ENCODE measurements at regions of chr2 and their contacts with region 1.

Region 1: GRCh38 chr2:100893392-100894089 is 73.6 kb downstream of the NPAS2 start:
- DNase-seq: peak in 1 of 4 donors; percentile 35
- ATAC-seq: no peak
- H3K4me3 ChIP-seq: no peak overlapping the region
- H3K27ac ChIP-seq: peak overlapping the region in 1 of 4 donors; percentile 23
- H3K4me1 ChIP-seq: peaks cover 27% of the 10 kb centered on the region
- H3K27me3 ChIP-seq: no peaks in the 10 kb centered on the region
- CTCF ChIP-seq: no peak
- POLR2A ChIP-seq: no peak

Region 2: DNA sequence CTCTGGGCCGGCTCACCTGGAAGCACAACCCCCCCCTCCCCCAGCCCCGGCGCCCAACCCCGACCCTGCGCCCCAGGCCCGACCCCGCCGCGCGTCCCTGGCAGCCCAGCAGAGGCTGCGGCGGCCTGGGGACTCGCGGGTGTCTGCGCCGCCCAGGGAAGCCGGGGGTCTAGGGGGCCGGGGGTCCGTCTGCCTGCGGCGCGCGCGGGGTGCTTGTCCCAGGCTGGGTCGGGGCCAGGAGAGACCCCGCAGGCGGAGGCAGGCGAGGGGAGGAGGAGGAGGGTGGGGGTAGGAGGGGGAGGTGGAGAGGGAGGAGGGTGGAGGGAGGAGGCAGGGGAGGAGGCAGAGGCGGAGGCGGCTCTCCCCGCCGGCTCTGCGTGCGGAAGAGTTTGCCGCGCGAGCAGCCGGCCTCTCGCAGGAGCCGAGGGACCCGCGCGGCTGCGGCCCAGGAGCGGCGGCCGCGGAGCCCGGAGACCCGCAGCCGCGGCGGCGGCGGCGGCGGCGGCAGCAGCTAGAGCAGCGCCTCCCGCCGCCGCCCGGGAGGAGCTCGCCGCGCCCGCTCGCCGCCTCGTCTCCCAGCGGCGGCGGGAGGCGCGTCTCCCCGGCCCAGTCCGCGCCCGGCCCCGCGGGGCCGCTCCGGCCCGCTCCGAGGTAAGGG is 73.6 kb before region 1 on chr2 and contains the start of gene NPAS2:
- intact Hi-C with region 1: loop called (anchors 10 kb)
- DNase-seq: peak; percentile 53 to 69 (median 66)
- ATAC-seq: peak; percentile 69
- H3K4me3 ChIP-seq: peak within 1 kb of the TSS; percentile 62 to 88
- H3K27ac ChIP-seq: peak within 1 kb of the TSS; percentile 76 to 90 (median 83)
- H3K4me1 ChIP-seq: peaks cover 48% of the 10 kb centered on the region
- H3K27me3 ChIP-seq: no peaks in the 10 kb centered on the region
- CTCF ChIP-seq: no peak
- POLR2A ChIP-seq: peak in 1 of 3 donors; percentile 37
- total RNA-seq, gene NPAS2: 32.7 to 51.7 TPM

Measured in body of pancreas (tissue), 4 donors.